Calu3 (cell line): ENCODE measurements at regions of chr5 and their contacts with region 1.

Region 1: GRCh38 chr5:120614531-120615180 is 150.6 kb downstream of the PRR16 start:
- DNase-seq: no peak
- H3K4me3 Mint-ChIP-seq: peak overlapping the region; percentile 24
- H3K27ac Mint-ChIP-seq: peak overlapping the region; percentile 83
- H3K4me1 Mint-ChIP-seq: peaks cover 48% of the 10 kb centered on the region
- H3K27me3 Mint-ChIP-seq: no peaks in the 10 kb centered on the region
- CTCF ChIP-seq: no peak

Region 2: DNA sequence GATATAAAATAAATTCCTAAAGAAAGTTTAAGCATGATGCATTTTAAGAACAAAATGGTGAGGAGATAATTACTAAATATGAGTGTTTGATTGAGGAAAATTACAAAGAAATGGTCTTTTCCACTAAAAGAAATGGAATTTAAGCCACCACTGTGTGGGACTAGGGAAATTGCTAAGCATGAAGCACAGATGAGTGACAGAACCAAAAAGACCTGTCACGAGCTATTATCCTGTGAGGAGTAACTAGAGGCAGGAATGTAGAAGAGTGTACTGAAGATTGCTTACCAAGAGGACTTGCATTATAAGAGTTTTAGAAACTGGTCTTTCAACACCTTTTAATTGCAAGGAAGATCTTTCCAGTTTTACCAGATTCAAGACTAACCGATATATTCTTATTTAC is 344.2 kb before region 1 on chr5:
- CTCF ChIA-PET with region 1: no interaction called
- intact Hi-C with region 1: no loop called
- DNase-seq: no peak
- H3K4me3 Mint-ChIP-seq: no peak overlapping the region
- H3K27ac Mint-ChIP-seq: no peak overlapping the region
- H3K4me1 Mint-ChIP-seq: no peaks in the 10 kb centered on the region
- H3K27me3 Mint-ChIP-seq: no peaks in the 10 kb centered on the region
- CTCF ChIP-seq: no peak

Region 3: DNA sequence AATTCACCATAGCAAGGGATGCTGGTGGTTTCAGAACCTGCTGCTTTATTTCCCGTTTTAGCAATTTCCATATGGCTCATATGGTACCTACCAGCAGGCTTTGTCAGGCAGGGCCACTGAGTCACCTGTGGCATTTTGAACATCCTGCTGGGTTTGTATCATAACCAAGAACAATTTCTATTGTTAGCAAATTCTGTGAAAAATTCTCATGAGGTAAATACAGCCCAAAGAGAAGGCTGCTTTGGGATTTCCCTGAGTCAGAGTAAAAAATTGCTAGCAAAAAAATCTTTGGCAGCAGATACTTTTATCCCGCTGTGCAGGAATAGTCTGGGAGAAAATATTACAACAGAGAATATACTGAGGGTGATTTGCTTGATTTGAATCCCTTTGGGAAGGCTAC is 97.9 kb before region 1 on chr5:
- CTCF ChIA-PET with region 1: no interaction called
- intact Hi-C with region 1: no loop called
- DNase-seq: no peak
- H3K4me3 Mint-ChIP-seq: no peak overlapping the region
- H3K27ac Mint-ChIP-seq: no peak overlapping the region
- H3K4me1 Mint-ChIP-seq: peaks cover 11% of the 10 kb centered on the region
- H3K27me3 Mint-ChIP-seq: no peaks in the 10 kb centered on the region
- CTCF ChIP-seq: no peak

Region 4: DNA sequence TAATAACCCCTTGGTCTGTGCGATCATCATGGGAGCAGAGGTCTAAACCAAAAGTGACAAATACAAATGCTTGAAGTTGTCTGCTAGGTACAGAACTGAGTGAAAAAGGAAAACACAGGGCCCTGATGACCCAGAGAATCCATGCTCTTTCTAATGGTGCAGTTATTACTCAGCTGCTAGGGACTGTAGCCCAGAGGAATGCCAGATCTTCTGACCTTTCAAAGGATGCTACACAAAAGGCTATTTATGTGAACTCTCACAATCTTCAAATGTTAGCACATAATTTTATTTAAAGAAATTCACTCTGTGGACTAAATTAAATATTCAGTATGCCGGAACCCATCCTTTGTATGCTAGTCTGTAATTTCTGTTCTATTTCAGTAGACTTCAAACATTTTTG is 70.6 kb before region 1 on chr5:
- CTCF ChIA-PET with region 1: interaction called, 3 read pairs
- intact Hi-C with region 1: loop called (anchors 5 kb)
- DNase-seq: no peak
- H3K4me3 Mint-ChIP-seq: no peak overlapping the region
- H3K27ac Mint-ChIP-seq: no peak overlapping the region
- H3K4me1 Mint-ChIP-seq: peaks cover 19% of the 10 kb centered on the region
- H3K27me3 Mint-ChIP-seq: no peaks in the 10 kb centered on the region
- CTCF ChIP-seq: no peak